Mammary epithelial cell (primary cell): ENCODE measurements at regions of chr14 and their contacts with region 1.

Region 1: DNA sequence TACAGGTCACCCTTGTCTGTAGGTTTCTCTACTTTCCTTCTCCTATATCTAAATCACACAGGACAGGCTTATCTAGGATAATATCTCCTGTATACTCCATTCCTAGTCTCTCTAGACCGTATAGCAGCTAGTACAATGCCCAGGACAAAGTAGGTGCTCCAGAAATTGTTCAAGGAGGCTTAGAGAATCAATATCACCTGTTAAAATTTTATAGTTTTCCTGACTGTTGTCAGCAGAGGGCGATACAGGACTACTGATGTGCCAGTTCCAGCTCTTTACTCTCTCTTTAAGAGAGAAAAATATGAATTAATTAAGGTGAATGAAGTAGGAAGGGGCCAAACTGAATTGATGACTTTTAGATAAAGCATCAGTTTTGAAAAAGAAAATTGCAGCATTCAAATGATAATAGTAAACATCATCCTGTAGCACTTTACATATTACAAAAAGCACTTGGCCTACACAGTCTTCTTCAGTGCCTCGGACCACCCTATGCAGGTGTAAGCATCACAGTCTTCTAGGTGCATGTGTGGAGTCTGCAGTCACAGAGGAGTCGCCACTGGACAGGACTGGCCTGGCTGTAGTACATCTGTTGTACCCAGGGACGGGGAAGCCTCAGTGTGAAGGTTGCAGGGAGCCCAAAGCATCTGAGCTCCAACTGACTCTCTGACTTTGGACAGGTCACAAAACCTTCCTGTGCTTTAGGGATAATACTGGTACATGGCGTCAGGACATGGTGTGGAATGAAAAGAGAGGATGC is 61.9 kb upstream of the MAX start:
- DNase-seq: no peak
- H3K4me3 ChIP-seq: no peak overlapping the region
- H3K27ac ChIP-seq: no peak overlapping the region
- H3K4me1 ChIP-seq: peaks cover 3% of the 10 kb centered on the region
- H3K27me3 ChIP-seq: no peaks in the 10 kb centered on the region
- CTCF ChIP-seq: peak; percentile 46 to 61

Region 2: GRCh38 chr14:64986578-64987571 is 177.4 kb before region 1 on chr14 and contains the start of gene FNTB:
- CTCF ChIA-PET with region 1: interaction called, 5 read pairs
- dilution Hi-C with region 1: no loop called
- in situ Hi-C with region 1: no loop called
- intact Hi-C with region 1: loop called (anchors 1 kb)
- DNase-seq: peak; percentile 95
- H3K4me3 ChIP-seq: peak within 1 kb of the TSS; percentile 79 to 86 (median 83)
- H3K27ac ChIP-seq: peak within 1 kb of the TSS; percentile 61
- H3K4me1 ChIP-seq: peaks cover 6% of the 10 kb centered on the region
- H3K27me3 ChIP-seq: no peaks in the 10 kb centered on the region
- CTCF ChIP-seq: peak; percentile 95 to 97
- total RNA-seq, gene FNTB: 11.7 to 12.5 TPM

Region 3: GRCh38 chr14:65206448-65207096 is 42.3 kb after region 1 on chr14:
- CTCF ChIA-PET with region 1: no interaction called
- dilution Hi-C with region 1: no loop called
- in situ Hi-C with region 1: no loop called
- intact Hi-C with region 1: loop called (anchors 1 kb)
- DNase-seq: peak; percentile 80
- H3K4me3 ChIP-seq: no peak overlapping the region
- H3K27ac ChIP-seq: no peak overlapping the region
- H3K4me1 ChIP-seq: peaks cover 25% of the 10 kb centered on the region
- H3K27me3 ChIP-seq: no peaks in the 10 kb centered on the region
- CTCF ChIP-seq: no peak

Region 4: GRCh38 chr14:65373679-65374039 is 209.4 kb after region 1 on chr14:
- CTCF ChIA-PET with region 1: no interaction called
- dilution Hi-C with region 1: no loop called
- in situ Hi-C with region 1: no loop called
- intact Hi-C with region 1: loop called (anchors 1 kb)
- DNase-seq: peak; percentile 24
- H3K4me3 ChIP-seq: peak overlapping the region in 2 of 3 experiments; percentile 21 to 36
- H3K27ac ChIP-seq: no peak overlapping the region
- H3K4me1 ChIP-seq: peaks cover 3% of the 10 kb centered on the region
- H3K27me3 ChIP-seq: no peaks in the 10 kb centered on the region
- CTCF ChIP-seq: peak in 1 of 2 donors; percentile 34

Region 5: DNA sequence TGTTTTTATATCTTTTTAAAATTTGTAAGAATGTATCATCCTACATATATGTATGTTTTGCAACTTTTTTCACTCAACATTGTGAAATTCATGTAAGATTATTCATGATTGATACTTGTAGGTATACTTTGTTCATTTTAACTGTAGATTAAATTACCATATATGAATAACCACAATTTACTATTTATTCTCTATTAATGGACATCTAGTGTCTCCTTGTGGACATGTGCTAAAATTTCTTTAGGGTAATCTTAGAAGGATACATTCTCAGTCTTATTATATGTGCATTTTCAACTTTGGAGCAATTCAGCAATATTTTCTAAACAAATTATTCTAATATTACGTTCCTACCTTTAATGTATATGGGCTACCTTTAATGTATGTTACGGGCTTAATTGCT is 440.7 kb after region 1 on chr14:
- CTCF ChIA-PET with region 1: no interaction called
- dilution Hi-C with region 1: no loop called
- in situ Hi-C with region 1: loop called in 1 of 2 experiments (anchors 25 kb)
- intact Hi-C with region 1: loop called (anchors 2 kb)
- DNase-seq: no peak
- H3K4me3 ChIP-seq: no peak overlapping the region
- H3K27ac ChIP-seq: no peak overlapping the region
- H3K4me1 ChIP-seq: no peaks in the 10 kb centered on the region
- H3K27me3 ChIP-seq: no peaks in the 10 kb centered on the region
- CTCF ChIP-seq: peak; percentile 11 to 35

Region 6: GRCh38 chr14:65832431-65833266 is 668.4 kb after region 1 on chr14:
- CTCF ChIA-PET with region 1: no interaction called
- dilution Hi-C with region 1: no loop called
- in situ Hi-C with region 1: loop called (anchors 10 to 25 kb)
- intact Hi-C with region 1: no loop called
- DNase-seq: no peak
- H3K4me3 ChIP-seq: no peak overlapping the region
- H3K27ac ChIP-seq: no peak overlapping the region
- H3K4me1 ChIP-seq: no peaks in the 10 kb centered on the region
- H3K27me3 ChIP-seq: peaks cover 9% of the 10 kb centered on the region
- CTCF ChIP-seq: peak in 1 of 2 donors; percentile 8

Region 7: GRCh38 chr14:66070509-66071319 is 906.5 kb after region 1 on chr14:
- CTCF ChIA-PET with region 1: no interaction called
- dilution Hi-C with region 1: no loop called
- in situ Hi-C with region 1: no loop called
- intact Hi-C with region 1: loop called (anchors 1 kb)
- DNase-seq: peak; percentile 31
- H3K4me3 ChIP-seq: no peak overlapping the region
- H3K27ac ChIP-seq: no peak overlapping the region
- H3K4me1 ChIP-seq: peaks cover 16% of the 10 kb centered on the region
- H3K27me3 ChIP-seq: no peaks in the 10 kb centered on the region
- CTCF ChIP-seq: peak; percentile 72 to 83